ENCODE measurements at regions of chr10 and their contacts with region 1.

Region 1: GRCh38 chr10:87771871-87772500 is 46.0 kb downstream of the ATAD1 start:
- DNase-seq: no peak
- ATAC-seq: peak; percentile 82
- H3K4me3 ChIP-seq: no peak overlapping the region
- H3K27ac ChIP-seq: no peak overlapping the region
- H3K4me1 ChIP-seq: peaks cover 5% of the 10 kb centered on the region; the same call in 1 of the 2 replicates
- H3K27me3 ChIP-seq: no peaks in the 10 kb centered on the region
- CTCF ChIP-seq: peak; percentile 24 to 46 (median 43); a peak in 5 of 6 replicates
- EP300 ChIP-seq: no peak
- POLR2A ChIP-seq: no peak
- RAD21 ChIP-seq: peak; percentile 65

Region 2: GRCh38 chr10:87531908-87532622 is 239.9 kb before region 1 on chr10:
- CTCF ChIA-PET with region 1: interaction called, 17 read pairs
- POLR2A ChIA-PET with region 1: no interaction called
- RAD21 ChIA-PET with region 1: interaction called, 7 read pairs
- SMC1A ChIA-PET with region 1: interaction called, 3 read pairs
- in situ Hi-C with region 1: no loop called
- intact Hi-C with region 1: loop called (anchors 2 kb)
- DNase-seq: no peak
- ATAC-seq: no peak
- H3K4me3 ChIP-seq: no peak overlapping the region
- H3K27ac ChIP-seq: no peak overlapping the region
- H3K4me1 ChIP-seq: peaks cover 17% of the 10 kb centered on the region
- H3K27me3 ChIP-seq: no peaks in the 10 kb centered on the region
- CTCF ChIP-seq: no peak
- EP300 ChIP-seq: no peak
- POLR2A ChIP-seq: no peak
- RAD21 ChIP-seq: no peak

Region 3: GRCh38 chr10:87659571-87660483 is 112.2 kb before region 1 on chr10 and contains the start of gene PAPSS2:
- CTCF ChIA-PET with region 1: no interaction called
- POLR2A ChIA-PET with region 1: no interaction called
- RAD21 ChIA-PET with region 1: interaction called, 3 read pairs
- SMC1A ChIA-PET with region 1: no interaction called
- in situ Hi-C with region 1: no loop called
- intact Hi-C with region 1: loop called (anchors 2 kb)
- DNase-seq: no peak
- ATAC-seq: peak; percentile 65
- H3K4me3 ChIP-seq: peak within 1 kb of the TSS; percentile 74
- H3K27ac ChIP-seq: no peak within 1 kb of the TSS
- H3K4me1 ChIP-seq: no peaks in the 10 kb centered on the region; the same call in 1 of the 2 replicates
- H3K27me3 ChIP-seq: peaks cover 3 to 4% of the 10 kb centered on the region in 2 experiments
- CTCF ChIP-seq: no peak
- EP300 ChIP-seq: no peak
- POLR2A ChIP-seq: 0 out of 2 replicates have a peak, but pooled peaks have one; percentile 22
- RAD21 ChIP-seq: no peak
- polyA plus RNA-seq, gene PAPSS2: 0.29 to 0.31 TPM

Region 4: GRCh38 chr10:87794285-87794684 is 22.3 kb after region 1 on chr10:
- CTCF ChIA-PET with region 1: interaction called, 4 read pairs
- POLR2A ChIA-PET with region 1: no interaction called
- RAD21 ChIA-PET with region 1: interaction called, 5 read pairs
- SMC1A ChIA-PET with region 1: interaction called, 14 read pairs
- in situ Hi-C with region 1: no loop called
- intact Hi-C with region 1: no loop called
- DNase-seq: peak; percentile 48
- ATAC-seq: peak; percentile 63
- H3K4me3 ChIP-seq: no peak overlapping the region
- H3K27ac ChIP-seq: peak overlapping the region; percentile 7
- H3K4me1 ChIP-seq: peaks cover 18% of the 10 kb centered on the region
- H3K27me3 ChIP-seq: no peaks in the 10 kb centered on the region
- CTCF ChIP-seq: no peak
- EP300 ChIP-seq: peak in 1 of 2 experiments; percentile 59; a peak in 1 of 4 replicates
- POLR2A ChIP-seq: no peak
- RAD21 ChIP-seq: no peak

Measured in GM12878 (cell line).